CD8-positive, alpha-beta memory T cell (primary cell): ENCODE measurements at regions of chr7 and their contacts with region 1.

Region 1: GRCh38 chr7:139075031-139075652 is 34.4 kb downstream of the ZC3HAV1 start:
- DNase-seq: peak; percentile 58 to 80 (median 78)
- H3K4me3 ChIP-seq: no peak overlapping the region
- H3K4me3 Mint-ChIP-seq: peak overlapping the region; percentile 22 to 82 (median 58)
- H3K27ac ChIP-seq: no peak overlapping the region
- H3K27ac Mint-ChIP-seq: peak overlapping the region; percentile 66 to 91 (median 81)
- H3K4me1 ChIP-seq: peaks cover 58% of the 10 kb centered on the region
- H3K4me1 Mint-ChIP-seq: peaks cover 51 to 82% (median 75%) of the 10 kb centered on the region in 3 donors
- H3K27me3 ChIP-seq: no peaks in the 10 kb centered on the region
- H3K27me3 Mint-ChIP-seq: peaks cover 0 to 1% of the 10 kb centered on the region in 2 donors

Region 2: DNA sequence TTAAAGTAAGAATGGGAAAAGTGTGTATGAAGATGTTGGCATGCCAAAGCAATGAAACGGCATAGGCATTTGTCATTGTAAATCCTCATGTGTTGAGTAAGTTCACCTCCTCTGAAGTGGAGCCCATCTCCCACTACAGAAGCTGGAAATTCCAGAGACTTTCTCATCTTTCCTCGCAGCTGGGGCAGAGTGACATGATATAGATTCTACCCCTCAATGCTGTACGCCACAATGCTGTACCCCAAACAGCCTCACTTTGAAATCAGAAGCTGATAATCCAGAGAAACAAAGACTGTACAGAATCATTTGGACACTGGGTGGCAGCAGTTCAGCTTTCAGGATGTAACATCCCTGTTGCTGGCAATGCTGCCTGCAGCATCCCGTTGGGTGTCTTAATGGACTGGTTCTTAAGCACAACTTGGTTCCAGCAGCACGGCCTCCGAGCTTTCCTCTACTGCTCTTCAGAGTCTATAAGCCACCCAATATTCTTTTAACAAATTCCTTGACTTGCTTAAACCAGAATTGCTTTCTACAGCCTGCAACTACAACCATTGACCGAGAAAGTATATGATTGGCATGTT is 58.1 kb before region 1 on chr7:
- CTCF ChIA-PET with region 1: interaction called, 30 read pairs
- POLR2A ChIA-PET with region 1: interaction called, 5 read pairs
- DNase-seq: peak; percentile 35 to 73 (median 51)
- H3K4me3 ChIP-seq: no peak overlapping the region
- H3K4me3 Mint-ChIP-seq: peak overlapping the region in 1 of 7 donors; percentile 2
- H3K27ac ChIP-seq: no peak overlapping the region
- H3K27ac Mint-ChIP-seq: peak overlapping the region in 1 of 8 donors; percentile 58
- H3K4me1 ChIP-seq: no peaks in the 10 kb centered on the region
- H3K4me1 Mint-ChIP-seq: peaks cover 6 to 7% (median 6%) of the 10 kb centered on the region in 3 donors
- H3K27me3 ChIP-seq: no peaks in the 10 kb centered on the region
- H3K27me3 Mint-ChIP-seq: peaks cover 5 to 28% of the 10 kb centered on the region in 2 donors

Region 3: DNA sequence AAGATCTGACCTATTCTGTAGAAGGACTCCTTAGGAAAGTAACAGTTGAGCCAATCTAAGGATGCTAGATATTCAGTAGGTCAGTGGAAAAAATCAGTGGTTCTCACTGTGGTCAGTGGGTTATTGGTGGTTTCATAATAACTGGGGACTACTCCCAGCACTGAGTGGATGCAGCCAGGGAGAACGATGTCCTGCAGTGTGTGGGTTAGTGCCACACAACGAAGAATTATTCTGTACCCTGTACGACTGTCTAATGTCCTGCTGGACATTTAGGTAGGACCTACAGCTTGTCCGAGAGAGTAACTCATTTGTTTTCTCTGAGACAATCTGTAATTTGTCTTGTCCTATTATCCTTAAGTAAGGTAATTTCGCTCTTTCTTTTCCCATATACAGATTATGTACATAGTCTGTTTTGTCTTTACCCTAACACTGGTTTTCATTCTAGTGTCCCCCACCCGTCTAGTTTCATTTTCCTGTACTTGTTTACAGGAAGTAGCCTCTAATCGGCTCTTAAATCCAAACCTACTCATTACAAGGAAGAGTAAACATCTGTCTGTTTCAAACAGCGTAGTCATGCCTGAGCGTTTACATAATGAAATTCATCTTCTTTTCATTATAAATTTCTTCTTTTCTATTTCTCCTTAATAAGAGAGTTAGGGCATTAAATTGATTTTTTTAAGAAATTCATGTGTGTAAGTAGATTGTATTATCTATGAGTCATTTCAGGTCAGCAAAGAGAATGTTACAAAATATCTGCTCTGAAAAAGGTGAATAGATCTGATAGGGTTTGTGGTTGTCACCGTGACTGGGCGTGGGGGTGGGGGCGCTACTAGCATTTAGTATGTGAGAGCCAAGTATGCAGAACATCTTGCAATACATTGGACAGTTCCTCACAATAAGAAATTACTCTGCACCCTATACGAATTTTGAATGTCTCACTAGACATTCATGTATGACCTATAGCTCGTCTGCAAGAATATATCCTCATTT is 31.0 kb before region 1 on chr7:
- CTCF ChIA-PET with region 1: interaction called, 19 read pairs
- POLR2A ChIA-PET with region 1: no interaction called
- DNase-seq: peak; percentile 28 to 87 (median 69)
- H3K4me3 ChIP-seq: peak overlapping the region; percentile 13
- H3K4me3 Mint-ChIP-seq: peak overlapping the region; percentile 1 to 68 (median 58)
- H3K27ac ChIP-seq: peak overlapping the region; percentile 57
- H3K27ac Mint-ChIP-seq: peak overlapping the region; percentile 63 to 97 (median 84)
- H3K4me1 ChIP-seq: peaks cover 46% of the 10 kb centered on the region
- H3K4me1 Mint-ChIP-seq: peaks cover 59 to 74% (median 70%) of the 10 kb centered on the region in 3 donors
- H3K27me3 ChIP-seq: no peaks in the 10 kb centered on the region
- H3K27me3 Mint-ChIP-seq: peaks cover 0 to 1% of the 10 kb centered on the region in 2 donors

Region 4: DNA sequence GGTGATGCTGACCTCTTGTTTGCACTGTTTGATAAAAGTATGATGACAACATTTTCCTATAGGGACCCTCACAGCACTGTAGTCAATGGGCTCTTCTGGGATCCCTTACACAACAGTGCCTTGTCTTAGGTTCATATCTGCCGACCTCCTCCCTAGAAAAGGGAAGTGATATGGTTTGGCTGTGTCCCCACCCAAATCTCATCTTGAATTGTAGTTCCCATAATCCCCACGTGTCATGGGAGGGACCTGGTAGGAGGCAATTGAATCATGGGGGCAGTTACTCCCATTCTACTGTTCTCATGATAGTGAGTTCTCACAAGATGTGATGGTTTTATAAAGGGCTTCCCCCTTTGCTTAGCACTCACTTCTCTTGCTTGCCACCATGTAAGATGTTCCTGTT is 11.3 kb after region 1 on chr7:
- CTCF ChIA-PET with region 1: interaction called, 27 read pairs
- POLR2A ChIA-PET with region 1: interaction called, 3 read pairs
- DNase-seq: no peak
- H3K4me3 ChIP-seq: no peak overlapping the region
- H3K4me3 Mint-ChIP-seq: peak overlapping the region in 6 of 7 donors; percentile 18 to 81 (median 31)
- H3K27ac ChIP-seq: no peak overlapping the region
- H3K27ac Mint-ChIP-seq: peak overlapping the region; percentile 35 to 88 (median 75)
- H3K4me1 ChIP-seq: peaks cover 85% of the 10 kb centered on the region
- H3K4me1 Mint-ChIP-seq: peaks cover 79 to 96% (median 92%) of the 10 kb centered on the region in 3 donors
- H3K27me3 ChIP-seq: no peaks in the 10 kb centered on the region
- H3K27me3 Mint-ChIP-seq: no peaks in the 10 kb centered on the region

Region 5: GRCh38 chr7:139104091-139104450 is 28.9 kb after region 1 on chr7:
- CTCF ChIA-PET with region 1: interaction called, 16 read pairs
- POLR2A ChIA-PET with region 1: interaction called, 13 read pairs
- DNase-seq: peak in 4 of 5 donors; percentile 28 to 66 (median 51)
- H3K4me3 ChIP-seq: peak overlapping the region; percentile 67
- H3K4me3 Mint-ChIP-seq: peak overlapping the region; percentile 89 to 99 (median 99)
- H3K27ac ChIP-seq: peak overlapping the region; percentile 55
- H3K27ac Mint-ChIP-seq: peak overlapping the region; percentile 72 to 97 (median 91)
- H3K4me1 ChIP-seq: peaks cover 17% of the 10 kb centered on the region
- H3K4me1 Mint-ChIP-seq: peaks cover 40 to 51% (median 51%) of the 10 kb centered on the region in 3 donors
- H3K27me3 ChIP-seq: no peaks in the 10 kb centered on the region
- H3K27me3 Mint-ChIP-seq: peaks cover 0 to 11% of the 10 kb centered on the region in 2 donors